KBM-7 (cell line): ENCODE measurements at regions of chr17 and their contacts with region 1.

Region 1: GRCh38 chr17:48678141-48678971 is 44.0 kb downstream of the PRAC1 start:
- DNase-seq: peak; percentile 85

Region 2: DNA sequence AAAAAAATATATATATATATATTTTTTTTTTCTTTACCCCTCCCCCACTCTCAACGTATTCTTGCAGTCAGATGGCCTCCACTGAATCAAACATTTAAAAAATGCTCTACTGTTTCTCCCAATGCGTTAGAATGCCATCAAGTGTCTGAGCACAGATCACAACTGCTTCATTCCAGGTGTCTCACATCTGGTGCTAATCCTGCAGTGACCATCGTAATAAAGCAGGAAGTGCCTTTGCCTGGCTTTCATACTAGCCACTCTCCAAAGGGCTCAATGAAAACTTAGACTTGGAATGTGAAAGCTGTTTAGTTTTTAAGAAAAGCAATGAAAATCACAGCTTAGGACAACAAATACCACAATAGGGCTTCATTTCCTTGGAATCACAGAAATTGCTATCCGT is 285.5 kb before region 1 on chr17:
- in situ Hi-C with region 1: no loop called
- DNase-seq: no peak

Region 3: DNA sequence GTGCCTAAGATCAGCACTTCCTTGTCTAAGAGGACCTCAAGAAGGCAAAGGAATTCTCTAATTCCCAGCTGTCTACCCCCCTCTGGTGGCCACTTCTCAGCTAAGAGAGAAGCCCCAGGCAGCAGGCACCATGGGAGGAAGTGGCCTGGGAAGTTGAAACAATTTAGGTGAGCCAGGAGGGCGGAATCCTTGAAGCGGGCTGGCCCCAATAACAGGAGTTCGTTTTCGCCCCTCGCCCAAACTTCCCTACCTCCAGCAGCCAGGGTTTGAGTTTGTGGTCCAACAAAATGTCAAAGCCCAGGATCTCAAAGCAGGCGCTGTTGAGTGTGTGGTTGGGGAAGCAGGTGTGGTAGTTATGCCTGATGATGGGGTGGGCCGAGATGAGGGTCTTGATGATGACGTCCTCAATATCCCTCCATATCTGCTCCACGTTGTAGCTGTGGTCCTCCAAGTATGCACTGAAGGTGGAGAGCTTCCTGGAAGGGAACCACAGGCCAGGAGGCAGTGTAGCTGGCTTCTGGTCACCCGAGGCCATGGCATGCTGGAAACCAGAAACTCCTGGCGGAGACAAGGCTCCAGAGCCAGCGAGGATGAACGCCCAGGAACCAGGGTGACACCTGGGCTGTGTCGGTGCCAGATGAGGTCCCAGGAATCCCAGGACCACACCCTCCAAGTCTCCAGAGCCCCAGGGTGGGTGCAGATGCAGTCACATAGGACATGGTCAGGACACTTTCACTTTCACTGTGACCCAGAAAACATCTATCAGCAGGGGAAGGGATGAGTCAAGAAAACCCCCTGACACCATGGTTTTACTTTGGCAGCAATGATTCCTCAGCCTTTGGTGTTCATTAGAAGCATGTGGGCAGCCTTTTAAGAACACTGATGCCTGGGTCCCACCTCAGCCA is 113.0 kb after region 1 on chr17:
- in situ Hi-C with region 1: loop called (anchors 25 kb)
- DNase-seq: peak; percentile 84

Region 4: DNA sequence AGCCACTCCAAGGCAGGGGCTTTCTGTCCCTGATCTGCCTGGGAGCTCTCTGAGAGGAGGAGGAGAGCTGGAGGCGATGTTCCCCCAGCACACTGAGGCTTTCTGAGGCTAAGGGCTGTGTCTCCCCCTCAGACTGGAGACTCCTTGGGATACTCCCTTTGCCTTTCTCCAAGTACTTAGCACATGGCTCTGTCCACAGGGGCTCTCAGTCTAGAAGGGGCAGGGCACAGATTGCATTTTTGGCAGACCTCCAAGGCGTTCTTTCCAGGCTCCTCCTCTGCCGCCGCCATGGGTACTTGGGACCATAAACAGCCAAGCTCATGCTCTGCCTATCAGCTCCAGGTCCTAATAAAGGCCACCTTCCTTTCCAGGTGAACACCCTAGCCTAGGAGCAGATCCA is 291.9 kb after region 1 on chr17:
- in situ Hi-C with region 1: no loop called
- DNase-seq: no peak